ENCODE measurements at regions of chr16 and their contacts with region 1.

Region 1: DNA sequence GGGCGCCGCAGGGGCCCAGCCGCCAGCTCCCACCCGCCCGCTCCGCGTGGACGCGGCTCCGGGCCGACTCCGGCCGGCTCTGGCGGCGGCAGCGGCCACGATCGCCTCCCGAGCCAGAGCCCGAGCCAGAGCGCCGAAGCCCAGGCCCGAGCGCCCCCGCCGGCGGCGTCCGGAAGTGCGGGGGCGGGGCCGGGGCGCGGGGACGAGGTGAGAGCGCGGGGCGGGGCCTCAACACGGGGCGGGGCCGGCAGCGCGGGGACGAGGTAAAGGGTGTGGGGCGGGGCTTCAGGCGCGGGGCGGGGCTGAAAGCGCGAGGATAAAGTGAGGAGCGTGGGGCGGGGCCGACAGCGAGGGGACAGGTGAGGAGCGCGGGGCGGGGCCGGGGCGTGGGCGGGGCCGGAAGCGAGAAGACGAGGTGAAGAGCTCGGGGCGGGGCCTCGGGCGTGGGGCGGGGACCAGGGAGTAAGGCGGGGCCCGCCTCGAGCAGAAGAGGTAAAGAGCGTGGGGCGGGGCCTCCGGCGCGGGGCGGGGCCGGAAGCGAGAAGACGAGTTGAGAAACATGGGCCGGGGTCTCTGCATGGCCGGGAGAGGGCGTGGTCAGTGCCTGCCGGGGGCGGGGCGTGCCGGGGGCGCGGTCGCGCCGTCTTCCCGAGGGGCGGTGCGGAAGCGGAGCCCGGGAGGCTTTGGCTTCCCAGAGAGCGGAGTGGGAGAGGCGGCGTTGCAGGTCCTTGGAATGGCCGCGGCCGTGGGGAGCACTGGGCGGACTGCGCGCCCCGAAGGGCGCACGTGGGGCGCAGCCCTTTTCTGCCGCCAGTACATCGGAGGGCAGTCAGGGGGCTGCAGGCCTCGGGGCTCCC is at the start of gene AXIN1:
- DNase-seq: peak; percentile 50
- H3K4me3 ChIP-seq: peak within 1 kb of the TSS; percentile 68
- H3K27me3 ChIP-seq: no peaks in the 10 kb centered on the region
- CTCF ChIP-seq: no peak
- polyA plus RNA-seq, gene AXIN1: 4.0 and 4.3 TPM in 2 replicates

Region 2: GRCh38 chr16:330741-331140 is 22.0 kb before region 1 on chr16:
- CTCF ChIA-PET with region 1: no interaction called
- POLR2A ChIA-PET with region 1: no interaction called
- DNase-seq: no peak
- H3K4me3 ChIP-seq: no peak overlapping the region
- H3K27me3 ChIP-seq: no peaks in the 10 kb centered on the region
- CTCF ChIP-seq: no peak

Region 3: DNA sequence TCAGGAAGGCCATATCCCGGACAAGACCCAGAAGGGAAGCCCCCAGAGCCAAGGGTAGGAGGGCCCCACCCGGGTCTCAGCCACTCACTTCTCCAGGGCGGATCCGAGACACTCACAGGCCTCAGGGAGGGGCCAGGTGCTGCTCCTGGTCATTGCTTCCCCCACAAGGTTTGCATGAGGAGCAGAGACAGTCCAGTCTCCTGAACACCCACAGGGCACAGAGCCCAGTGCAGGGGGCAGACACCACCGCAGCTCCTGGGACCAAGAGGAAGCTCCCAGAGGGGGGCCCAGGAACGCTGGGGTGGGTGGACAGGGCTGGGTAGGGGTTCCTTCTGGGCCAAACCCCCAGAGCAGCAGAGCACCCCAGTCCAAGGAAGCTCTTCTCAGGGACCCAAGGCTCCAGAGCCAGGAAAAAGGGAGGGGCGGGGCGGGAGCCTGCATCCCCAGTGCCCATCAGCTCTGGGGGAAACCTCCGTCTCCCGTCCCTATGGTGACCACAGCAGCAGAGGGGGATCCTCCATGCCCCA is 18.3 kb after region 1 on chr16:
- CTCF ChIA-PET with region 1: no interaction called
- POLR2A ChIA-PET with region 1: no interaction called
- DNase-seq: no peak
- H3K4me3 ChIP-seq: no peak overlapping the region
- H3K27me3 ChIP-seq: no peaks in the 10 kb centered on the region
- CTCF ChIP-seq: no peak

Region 4: DNA sequence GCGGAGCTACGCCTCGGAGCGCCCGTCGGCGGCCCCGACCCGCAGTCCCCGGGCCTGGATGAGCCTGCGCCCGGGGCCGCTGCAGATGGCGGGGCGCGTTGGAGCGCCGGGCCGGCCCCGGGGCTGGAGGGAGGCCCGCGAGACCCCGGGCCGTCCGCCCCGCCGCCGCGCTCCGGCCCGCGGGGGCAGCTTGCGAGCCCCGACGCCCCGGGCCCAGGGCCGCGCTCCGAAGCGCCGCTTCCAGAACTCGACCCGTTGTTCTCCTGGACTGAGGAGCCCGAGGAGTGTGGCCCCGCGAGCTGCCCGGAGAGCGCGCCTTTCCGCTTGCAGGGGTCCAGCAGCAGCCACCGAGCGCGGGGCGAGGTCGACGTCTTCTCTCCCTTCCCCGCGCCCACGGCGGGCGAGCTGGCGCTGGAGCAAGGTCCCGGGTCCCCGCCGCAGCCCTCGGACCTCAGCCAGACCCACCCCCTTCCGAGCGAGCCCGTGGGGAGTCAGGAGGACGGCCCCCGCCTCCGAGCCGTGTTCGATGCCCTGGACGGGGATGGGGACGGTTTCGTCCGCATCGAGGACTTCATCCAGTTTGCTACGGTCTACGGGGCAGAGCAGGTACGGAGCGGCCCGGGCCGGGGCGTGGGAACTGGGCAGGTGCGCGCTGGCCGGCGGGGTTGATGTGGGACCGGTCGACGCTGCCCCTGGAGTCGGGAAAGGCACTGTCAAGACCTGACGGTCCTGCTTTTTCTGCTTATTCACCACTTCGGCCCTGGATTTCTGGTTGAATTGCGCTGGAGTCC is 73.5 kb after region 1 on chr16:
- CTCF ChIA-PET with region 1: no interaction called
- POLR2A ChIA-PET with region 1: interaction called, 18 read pairs
- DNase-seq: no peak
- H3K4me3 ChIP-seq: peak overlapping the region; percentile 87
- H3K27me3 ChIP-seq: no peaks in the 10 kb centered on the region
- CTCF ChIP-seq: no peak